SK-N-SH (cell line): ENCODE measurements at regions of chr11 and their contacts with region 1.

Region 1: DNA sequence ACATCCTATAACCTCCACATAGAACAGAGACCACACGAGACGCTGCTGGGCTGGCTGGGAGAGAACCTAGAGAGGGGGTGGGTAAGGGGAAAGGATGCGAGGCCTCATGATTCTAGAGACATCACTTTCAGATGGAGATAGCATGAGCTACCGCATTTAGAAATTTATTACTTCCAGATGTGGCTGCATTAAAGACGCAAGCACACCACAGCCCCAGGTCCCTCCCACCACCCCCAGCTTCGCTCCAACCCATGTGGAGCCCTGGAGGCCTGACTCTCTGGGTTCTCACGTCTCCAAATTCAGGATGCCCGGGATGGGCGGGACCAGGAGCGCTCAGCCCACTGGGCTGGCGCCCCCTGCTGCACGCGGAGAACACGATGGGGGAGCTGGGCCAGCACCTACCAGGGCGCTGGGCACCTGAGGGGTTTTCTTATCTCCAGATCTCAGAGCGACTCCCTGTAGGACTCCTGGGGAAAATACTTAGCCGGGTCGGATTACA is 13.6 kb downstream of the MRPL21 start:
- DNase-seq: peak; percentile 89
- H3K4me3 ChIP-seq: peak overlapping the region in 1 of 2 experiments; percentile 19; a peak in 1 of 4 replicates
- H3K27ac ChIP-seq: peak overlapping the region; percentile 83 to 90
- H3K4me1 ChIP-seq: peaks cover 25 to 33% of the 10 kb centered on the region in 2 experiments
- H3K27me3 ChIP-seq: no peaks in the 10 kb centered on the region
- CTCF ChIP-seq: peak; percentile 82
- EP300 ChIP-seq: peak in 1 of 2 experiments; percentile 13; a peak in 1 of 4 replicates
- RAD21 ChIP-seq: peak; percentile 63

Region 2: GRCh38 chr11:68610452-68611116 is 279.4 kb before region 1 on chr11:
- CTCF ChIA-PET with region 1: interaction called, 15 read pairs
- POLR2A ChIA-PET with region 1: interaction called, 4 read pairs
- DNase-seq: peak; percentile 67
- H3K4me3 ChIP-seq: no peak overlapping the region
- H3K27ac ChIP-seq: peak overlapping the region in 1 of 2 experiments; percentile 11; a peak in 1 of 4 replicates
- H3K4me1 ChIP-seq: no peaks in the 10 kb centered on the region; a peak in 2 of 4 replicates
- H3K27me3 ChIP-seq: no peaks in the 10 kb centered on the region
- CTCF ChIP-seq: peak; percentile 53
- EP300 ChIP-seq: no peak
- RAD21 ChIP-seq: peak; percentile 74

Region 3: DNA sequence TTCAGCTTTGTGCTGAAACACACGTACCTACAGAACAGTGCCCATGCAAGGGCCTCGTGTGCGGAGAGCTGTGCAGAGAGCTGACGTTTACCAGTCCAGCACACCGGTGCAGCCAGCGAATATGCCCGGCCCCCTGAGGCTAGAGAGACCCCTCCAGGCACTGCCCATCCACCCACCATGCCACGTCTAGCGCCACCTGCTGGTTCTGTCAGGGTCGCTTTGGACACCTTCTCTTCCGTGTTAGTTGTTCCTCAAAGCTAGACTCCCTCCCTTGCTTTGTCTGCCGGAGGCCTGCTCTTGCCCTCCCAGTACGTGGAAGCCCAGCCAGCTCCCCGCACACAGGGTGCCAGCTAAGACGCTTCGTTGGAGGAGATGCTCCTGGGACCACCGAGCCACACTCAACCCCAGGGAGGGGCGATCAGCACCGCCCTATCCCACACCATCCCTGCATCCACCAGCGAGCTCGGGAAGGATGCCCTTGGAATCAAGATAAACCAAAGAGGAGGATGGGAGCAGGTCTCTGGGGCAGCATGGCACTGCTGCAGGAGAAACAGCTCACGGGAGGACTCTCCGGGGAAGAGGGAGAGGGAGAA is 91.7 kb before region 1 on chr11:
- CTCF ChIA-PET with region 1: interaction called, 10 read pairs
- POLR2A ChIA-PET with region 1: no interaction called
- DNase-seq: peak; percentile 72
- H3K4me3 ChIP-seq: peak overlapping the region in 1 of 2 experiments; percentile 37; a peak in 1 of 4 replicates
- H3K27ac ChIP-seq: no peak overlapping the region; a peak in 1 of 4 replicates
- H3K4me1 ChIP-seq: no peaks in the 10 kb centered on the region
- H3K27me3 ChIP-seq: no peaks in the 10 kb centered on the region
- CTCF ChIP-seq: peak; percentile 71
- EP300 ChIP-seq: no peak
- RAD21 ChIP-seq: peak; percentile 46

Region 4: GRCh38 chr11:68843703-68844312 is 46.2 kb before region 1 on chr11:
- CTCF ChIA-PET with region 1: interaction called, 12 read pairs
- POLR2A ChIA-PET with region 1: no interaction called
- DNase-seq: no peak
- H3K4me3 ChIP-seq: no peak overlapping the region
- H3K27ac ChIP-seq: no peak overlapping the region
- H3K4me1 ChIP-seq: peaks cover 11 to 12% of the 10 kb centered on the region in 2 experiments; a peak in 3 of 4 replicates
- H3K27me3 ChIP-seq: no peaks in the 10 kb centered on the region
- CTCF ChIP-seq: no peak
- EP300 ChIP-seq: no peak
- RAD21 ChIP-seq: no peak

Region 5: DNA sequence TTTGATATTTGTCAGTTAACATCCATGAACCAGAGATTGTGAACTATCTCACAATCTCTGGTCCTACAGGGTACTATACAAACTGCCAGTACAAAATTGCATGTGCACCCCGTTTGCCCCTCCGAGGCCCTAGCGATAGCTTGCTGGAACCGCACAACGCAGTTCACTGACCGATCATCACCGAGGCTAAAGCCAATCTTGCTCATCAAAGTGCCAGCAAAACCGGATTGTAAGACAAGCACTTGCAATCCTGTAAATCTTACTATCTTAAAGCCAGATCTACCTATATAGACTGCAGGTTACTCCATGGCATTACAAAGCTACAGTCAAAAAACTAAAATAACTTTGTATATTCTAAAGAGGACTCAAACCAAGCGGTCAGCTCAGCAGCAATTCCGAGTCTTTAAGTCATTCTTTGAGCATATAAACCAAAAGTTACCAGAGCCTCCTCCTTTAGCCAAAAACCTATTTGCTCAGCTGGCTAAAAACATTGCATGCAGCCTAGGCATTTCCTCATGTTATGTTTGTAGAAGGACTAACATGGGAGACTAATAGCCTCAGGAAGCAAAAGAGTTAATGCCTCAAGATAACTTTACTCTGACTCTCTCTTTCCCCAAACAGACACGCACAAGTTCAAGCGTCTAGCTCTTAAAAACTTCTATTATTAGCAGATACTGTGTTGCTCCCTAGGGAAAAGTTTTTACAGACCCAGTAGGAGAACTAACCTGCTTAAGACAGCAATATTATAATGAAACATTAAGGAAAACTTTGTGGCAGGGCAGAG is 17.6 kb before region 1 on chr11:
- CTCF ChIA-PET with region 1: interaction called, 16 read pairs
- POLR2A ChIA-PET with region 1: no interaction called
- DNase-seq: no peak
- H3K4me3 ChIP-seq: no peak overlapping the region
- H3K27ac ChIP-seq: no peak overlapping the region
- H3K4me1 ChIP-seq: no peaks in the 10 kb centered on the region
- H3K27me3 ChIP-seq: no peaks in the 10 kb centered on the region
- CTCF ChIP-seq: no peak
- EP300 ChIP-seq: no peak
- RAD21 ChIP-seq: no peak

Region 6: DNA sequence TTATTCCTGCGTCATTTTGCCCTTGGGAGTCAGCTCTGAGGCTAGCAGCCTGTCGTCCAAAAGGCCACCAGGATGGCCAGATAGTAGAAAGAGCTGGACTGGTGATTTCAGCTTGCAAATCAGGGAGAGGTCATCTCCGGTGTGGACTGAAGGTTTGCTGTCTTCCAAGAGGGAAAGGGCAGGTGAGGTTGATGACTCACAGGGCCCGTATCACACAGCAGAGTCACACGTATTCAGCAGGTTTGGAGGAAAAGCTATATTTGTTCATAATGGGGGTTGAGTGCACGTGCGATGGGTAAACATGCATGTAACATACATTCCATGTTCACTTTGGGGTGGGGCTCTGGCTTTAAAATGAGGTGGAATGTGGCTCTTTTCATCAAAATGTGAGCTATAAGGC is 12.0 kb before region 1 on chr11:
- CTCF ChIA-PET with region 1: interaction called, 16 read pairs
- POLR2A ChIA-PET with region 1: no interaction called
- DNase-seq: no peak
- H3K4me3 ChIP-seq: no peak overlapping the region
- H3K27ac ChIP-seq: no peak overlapping the region
- H3K4me1 ChIP-seq: peaks cover 0 to 2% of the 10 kb centered on the region in 2 experiments; a peak in 1 of 4 replicates
- H3K27me3 ChIP-seq: no peaks in the 10 kb centered on the region
- CTCF ChIP-seq: no peak
- EP300 ChIP-seq: no peak
- RAD21 ChIP-seq: no peak

Region 7: GRCh38 chr11:68900841-68901381 is 10.9 kb after region 1 on chr11:
- CTCF ChIA-PET with region 1: interaction called, 10 read pairs
- POLR2A ChIA-PET with region 1: interaction called, 3 read pairs
- DNase-seq: no peak
- H3K4me3 ChIP-seq: no peak overlapping the region
- H3K27ac ChIP-seq: no peak overlapping the region
- H3K4me1 ChIP-seq: peaks cover 14 to 18% of the 10 kb centered on the region in 2 experiments
- H3K27me3 ChIP-seq: no peaks in the 10 kb centered on the region
- CTCF ChIP-seq: no peak
- EP300 ChIP-seq: no peak
- RAD21 ChIP-seq: no peak